Kidney (tissue), 22 donors: ENCODE measurements at regions of chr10 and their contacts with region 1.

Region 1: DNA sequence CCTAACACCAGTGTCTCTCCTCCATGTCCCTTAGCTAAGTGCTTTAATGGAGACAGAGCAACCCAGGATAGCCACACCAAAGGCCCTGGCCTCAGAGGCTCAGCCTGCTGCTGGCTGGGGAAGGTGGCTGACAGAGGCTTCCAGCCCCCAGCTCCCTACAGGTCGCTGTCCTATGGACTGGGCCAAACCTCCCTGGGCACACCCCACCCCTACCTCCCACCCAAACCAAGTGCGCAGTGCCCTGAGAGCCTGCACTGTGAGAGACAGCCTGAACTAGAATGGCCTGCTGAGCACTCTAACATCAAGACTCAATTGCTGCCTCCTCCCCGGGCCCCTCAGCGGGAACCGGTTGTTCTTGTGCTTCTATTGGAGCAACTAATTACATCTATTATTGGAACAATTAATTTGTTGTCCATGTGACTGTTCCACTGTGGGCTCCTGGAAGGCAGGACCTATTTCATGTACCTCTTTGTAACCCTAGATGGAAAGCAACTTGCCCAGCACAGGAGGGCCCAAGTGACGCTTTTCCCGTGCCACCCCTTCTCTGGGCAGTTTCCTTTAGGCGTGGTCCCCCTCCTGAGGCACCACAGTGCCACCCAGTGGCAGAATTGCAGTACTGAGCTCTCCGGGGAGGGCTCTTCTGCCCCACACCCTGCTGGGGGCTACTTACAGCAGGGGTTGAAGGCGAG is 63.6 kb upstream of the WAPL start:
- DNase-seq: peak; percentile 68 to 86 (median 73)
- H3K4me3 ChIP-seq: no peak overlapping the region
- H3K27ac ChIP-seq: no peak overlapping the region
- H3K4me1 ChIP-seq: peaks cover 0 to 7% (median 0%) of the 10 kb centered on the region in 3 donors
- H3K27me3 ChIP-seq: no peaks in the 10 kb centered on the region
- CTCF ChIP-seq: peak; percentile 93

Region 2: GRCh38 chr10:86399879-86400704 is 185.1 kb before region 1 on chr10:
- intact Hi-C with region 1: loop called (anchors 5 kb)
- DNase-seq: peak; percentile 95 to 98 (median 96)
- H3K4me3 ChIP-seq: peak overlapping the region; percentile 12 to 73 (median 71)
- H3K27ac ChIP-seq: peak overlapping the region; percentile 85 to 92
- H3K4me1 ChIP-seq: peaks cover 0 to 24% (median 0%) of the 10 kb centered on the region in 3 donors
- H3K27me3 ChIP-seq: no peaks in the 10 kb centered on the region
- CTCF ChIP-seq: peak; percentile 87

Region 3: GRCh38 chr10:86668297-86669165 is 83.3 kb after region 1 on chr10 and contains the start of gene LDB3:
- intact Hi-C with region 1: no loop called
- DNase-seq: peak in 4 of 5 donors; percentile 81 to 88 (median 82)
- H3K4me3 ChIP-seq: no peak within 1 kb of the TSS
- H3K27ac ChIP-seq: peak within 1 kb of the TSS in 1 of 2 donors; percentile 11
- H3K4me1 ChIP-seq: peaks cover 0 to 8% (median 4%) of the 10 kb centered on the region in 3 donors
- H3K27me3 ChIP-seq: no peaks in the 10 kb centered on the region
- CTCF ChIP-seq: no peak
- total RNA-seq, gene LDB3: 7.7 TPM